Activated naive CD4-positive, alpha-beta T cell treated with anti-CD3 and anti-CD28 coated beads for 36 hours (primary cell): ENCODE measurements at regions of chr2 and their contacts with region 1.

Region 1: GRCh38 chr2:151437630-151438029 is 27.9 kb downstream of the RIF1 start:
- DNase-seq: no peak
- H3K4me3 Mint-ChIP-seq: no peak overlapping the region
- H3K27ac Mint-ChIP-seq: no peak overlapping the region
- H3K4me1 Mint-ChIP-seq: peaks cover 2% of the 10 kb centered on the region
- H3K27me3 Mint-ChIP-seq: no peaks in the 10 kb centered on the region

Region 2: GRCh38 chr2:151334082-151334815 is 103.4 kb before region 1 on chr2:
- CTCF ChIA-PET with region 1: no interaction called
- intact Hi-C with region 1: no loop called
- DNase-seq: no peak
- H3K4me3 Mint-ChIP-seq: no peak overlapping the region
- H3K27ac Mint-ChIP-seq: no peak overlapping the region
- H3K4me1 Mint-ChIP-seq: peaks cover 3% of the 10 kb centered on the region
- H3K27me3 Mint-ChIP-seq: peaks cover 12% of the 10 kb centered on the region

Region 3: DNA sequence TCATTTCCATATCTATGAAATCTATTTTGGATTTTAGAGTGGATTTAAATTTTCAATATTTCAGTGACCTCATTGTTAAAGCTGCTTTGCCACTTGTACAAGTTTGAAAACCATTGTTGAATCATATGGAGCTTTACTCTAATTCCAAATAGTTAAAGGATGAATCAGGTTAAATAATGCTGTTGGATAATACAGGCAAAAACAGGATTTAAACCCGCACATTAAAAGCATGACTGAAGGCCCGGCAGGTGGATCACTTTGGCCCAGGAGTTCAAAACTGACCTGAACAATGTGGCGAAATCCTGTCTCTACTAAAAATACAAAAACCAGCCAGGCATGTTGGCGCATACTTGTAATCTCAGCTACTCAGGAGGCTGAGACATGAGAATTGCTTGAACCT is 40.4 kb after region 1 on chr2:
- CTCF ChIA-PET with region 1: no interaction called
- intact Hi-C with region 1: loop called (anchors 5 kb)
- DNase-seq: no peak
- H3K4me3 Mint-ChIP-seq: no peak overlapping the region
- H3K27ac Mint-ChIP-seq: no peak overlapping the region
- H3K4me1 Mint-ChIP-seq: peaks cover 18% of the 10 kb centered on the region
- H3K27me3 Mint-ChIP-seq: no peaks in the 10 kb centered on the region

Region 4: GRCh38 chr2:152676461-152676860 is 1238.8 kb after region 1 on chr2:
- CTCF ChIA-PET with region 1: interaction called, 3 read pairs
- intact Hi-C with region 1: loop called (anchors 10 kb)
- DNase-seq: no peak
- H3K4me3 Mint-ChIP-seq: no peak overlapping the region
- H3K27ac Mint-ChIP-seq: no peak overlapping the region
- H3K4me1 Mint-ChIP-seq: peaks cover 6% of the 10 kb centered on the region
- H3K27me3 Mint-ChIP-seq: no peaks in the 10 kb centered on the region